Caco-2 (cell line): ENCODE measurements at regions of chr10 and their contacts with region 1.

Region 1: DNA sequence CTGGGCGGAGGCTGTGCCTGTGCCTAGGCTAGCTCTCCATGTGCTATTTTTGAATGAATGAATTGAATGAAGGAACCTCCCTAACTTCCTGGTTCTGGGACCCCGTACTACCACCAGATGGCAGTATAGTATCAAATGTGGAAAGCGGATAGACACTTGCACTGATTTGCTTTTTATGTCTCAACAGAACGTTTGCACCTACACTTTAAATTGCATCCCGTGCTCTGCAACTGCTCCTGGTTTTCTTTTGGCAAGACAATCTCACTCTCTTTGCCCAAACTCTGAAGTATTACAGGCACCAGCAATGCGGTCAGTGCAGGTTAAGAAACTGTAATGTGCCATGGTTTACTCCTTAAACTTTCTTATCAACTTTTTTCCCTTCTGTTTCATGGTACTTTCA is 6.5 kb downstream of the FZD8 start:
- DNase-seq: peak; percentile 60 to 78
- H3K4me3 ChIP-seq: no peak overlapping the region
- H3K4me3 Mint-ChIP-seq: no peak overlapping the region
- H3K27ac Mint-ChIP-seq: no peak overlapping the region
- H3K4me1 ChIP-seq: no peaks in the 10 kb centered on the region
- H3K4me1 Mint-ChIP-seq: no peaks in the 10 kb centered on the region
- H3K27me3 ChIP-seq: no peaks in the 10 kb centered on the region
- H3K27me3 Mint-ChIP-seq: no peaks in the 10 kb centered on the region
- CTCF ChIP-seq: peak; percentile 94 to 96

Region 2: GRCh38 chr10:35613597-35614226 is 21.9 kb before region 1 on chr10:
- CTCF ChIA-PET with region 1: interaction called, 14 read pairs
- POLR2A ChIA-PET with region 1: no interaction called
- intact Hi-C with region 1: no loop called
- DNase-seq: peak in 1 of 2 experiments; percentile 30
- H3K4me3 ChIP-seq: no peak overlapping the region
- H3K4me3 Mint-ChIP-seq: no peak overlapping the region
- H3K27ac Mint-ChIP-seq: no peak overlapping the region
- H3K4me1 ChIP-seq: peaks cover 34% of the 10 kb centered on the region
- H3K4me1 Mint-ChIP-seq: peaks cover 28% of the 10 kb centered on the region
- H3K27me3 ChIP-seq: no peaks in the 10 kb centered on the region
- H3K27me3 Mint-ChIP-seq: no peaks in the 10 kb centered on the region
- CTCF ChIP-seq: peak; percentile 41 to 47

Region 3: DNA sequence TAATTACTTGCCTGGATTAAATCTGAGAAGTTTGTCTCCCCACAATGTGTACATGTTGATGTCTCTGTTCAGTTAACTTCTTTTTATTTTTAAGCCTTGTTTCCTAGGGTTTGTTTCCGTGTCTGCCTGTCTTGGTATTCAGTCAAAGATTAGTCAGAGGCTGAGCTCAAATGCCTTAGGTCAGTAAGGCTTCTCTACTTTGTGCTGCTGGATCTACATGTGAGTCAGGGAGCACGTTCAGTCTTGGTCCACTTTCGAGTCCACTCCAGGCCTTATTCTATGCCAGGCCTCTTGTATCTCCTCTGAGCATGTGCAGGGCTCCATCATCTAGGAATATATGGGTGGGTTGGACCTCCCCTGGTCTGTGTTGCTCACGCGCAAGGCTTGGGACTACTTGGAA is 99.8 kb after region 1 on chr10:
- CTCF ChIA-PET with region 1: no interaction called
- POLR2A ChIA-PET with region 1: no interaction called
- intact Hi-C with region 1: no loop called
- DNase-seq: no peak
- H3K4me3 ChIP-seq: no peak overlapping the region
- H3K4me3 Mint-ChIP-seq: no peak overlapping the region
- H3K27ac Mint-ChIP-seq: no peak overlapping the region
- H3K4me1 ChIP-seq: peaks cover 8% of the 10 kb centered on the region
- H3K4me1 Mint-ChIP-seq: peaks cover 7% of the 10 kb centered on the region
- H3K27me3 ChIP-seq: no peaks in the 10 kb centered on the region
- H3K27me3 Mint-ChIP-seq: peaks cover 3% of the 10 kb centered on the region
- CTCF ChIP-seq: no peak

Region 4: GRCh38 chr10:35916791-35917190 is 281.2 kb after region 1 on chr10:
- CTCF ChIA-PET with region 1: interaction called, 9 read pairs
- POLR2A ChIA-PET with region 1: no interaction called
- intact Hi-C with region 1: loop called (anchors 1 kb)
- DNase-seq: no peak
- H3K4me3 ChIP-seq: no peak overlapping the region
- H3K4me3 Mint-ChIP-seq: no peak overlapping the region
- H3K27ac Mint-ChIP-seq: no peak overlapping the region
- H3K4me1 ChIP-seq: no peaks in the 10 kb centered on the region
- H3K4me1 Mint-ChIP-seq: no peaks in the 10 kb centered on the region
- H3K27me3 ChIP-seq: no peaks in the 10 kb centered on the region
- H3K27me3 Mint-ChIP-seq: peaks cover 14% of the 10 kb centered on the region
- CTCF ChIP-seq: peak in 1 of 2 experiments; percentile 27

Region 5: DNA sequence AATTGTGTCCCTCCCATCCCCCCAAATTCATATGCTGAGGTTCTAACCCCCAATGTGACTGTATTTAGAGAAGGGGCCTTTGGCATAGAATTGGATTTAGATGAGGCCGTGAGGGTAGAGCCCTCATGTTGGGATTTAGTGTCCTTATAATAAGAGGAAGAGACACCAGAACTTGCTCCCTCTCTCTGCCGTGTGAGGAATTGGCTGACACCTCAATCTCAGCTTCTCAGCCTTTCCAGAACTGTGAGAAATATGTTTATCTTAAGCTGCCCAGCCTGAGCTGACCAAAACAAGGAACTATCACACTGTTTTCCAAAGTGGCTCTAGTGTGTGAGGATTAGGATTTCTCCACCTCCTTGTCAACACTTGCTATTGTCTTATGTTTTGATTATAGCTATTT is 406.6 kb after region 1 on chr10:
- CTCF ChIA-PET with region 1: interaction called, 5 read pairs
- POLR2A ChIA-PET with region 1: no interaction called
- intact Hi-C with region 1: loop called (anchors 1 kb)
- DNase-seq: no peak
- H3K4me3 ChIP-seq: no peak overlapping the region
- H3K4me3 Mint-ChIP-seq: no peak overlapping the region
- H3K27ac Mint-ChIP-seq: no peak overlapping the region
- H3K4me1 ChIP-seq: no peaks in the 10 kb centered on the region
- H3K4me1 Mint-ChIP-seq: no peaks in the 10 kb centered on the region
- H3K27me3 ChIP-seq: no peaks in the 10 kb centered on the region
- H3K27me3 Mint-ChIP-seq: peaks cover 5% of the 10 kb centered on the region
- CTCF ChIP-seq: peak in 1 of 2 experiments; percentile 40

Region 6: GRCh38 chr10:36118314-36118713 is 482.7 kb after region 1 on chr10:
- CTCF ChIA-PET with region 1: no interaction called
- POLR2A ChIA-PET with region 1: no interaction called
- intact Hi-C with region 1: no loop called
- DNase-seq: no peak
- H3K4me3 ChIP-seq: no peak overlapping the region
- H3K4me3 Mint-ChIP-seq: no peak overlapping the region
- H3K27ac Mint-ChIP-seq: peak overlapping the region; percentile 55
- H3K4me1 ChIP-seq: peaks cover 29% of the 10 kb centered on the region
- H3K4me1 Mint-ChIP-seq: peaks cover 23% of the 10 kb centered on the region
- H3K27me3 ChIP-seq: no peaks in the 10 kb centered on the region
- H3K27me3 Mint-ChIP-seq: no peaks in the 10 kb centered on the region
- CTCF ChIP-seq: no peak

Region 7: DNA sequence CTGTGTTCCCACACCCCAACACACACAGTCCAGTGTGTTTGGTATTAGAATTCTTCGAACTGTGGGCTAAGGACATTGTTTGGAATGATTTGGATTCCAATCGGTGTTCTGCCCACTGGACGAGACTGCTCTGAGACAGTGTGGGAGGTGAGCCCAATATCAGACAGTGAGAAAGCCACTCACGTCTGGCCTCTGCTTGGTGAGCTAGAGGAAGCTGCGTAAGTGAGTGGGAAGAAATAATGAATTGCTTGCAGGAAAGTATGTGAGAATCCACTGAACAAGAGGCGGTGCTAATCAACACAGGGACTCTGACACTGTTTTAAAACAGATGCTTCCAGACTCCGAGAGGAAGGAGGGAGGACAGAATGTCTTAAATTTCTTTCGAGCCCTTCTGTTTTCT is 814.8 kb after region 1 on chr10:
- CTCF ChIA-PET with region 1: no interaction called
- POLR2A ChIA-PET with region 1: no interaction called
- intact Hi-C with region 1: no loop called
- DNase-seq: no peak
- H3K4me3 ChIP-seq: no peak overlapping the region
- H3K4me3 Mint-ChIP-seq: no peak overlapping the region
- H3K27ac Mint-ChIP-seq: no peak overlapping the region
- H3K4me1 ChIP-seq: peaks cover 7% of the 10 kb centered on the region
- H3K4me1 Mint-ChIP-seq: peaks cover 9% of the 10 kb centered on the region
- H3K27me3 ChIP-seq: no peaks in the 10 kb centered on the region
- H3K27me3 Mint-ChIP-seq: no peaks in the 10 kb centered on the region
- CTCF ChIP-seq: no peak

Region 8: DNA sequence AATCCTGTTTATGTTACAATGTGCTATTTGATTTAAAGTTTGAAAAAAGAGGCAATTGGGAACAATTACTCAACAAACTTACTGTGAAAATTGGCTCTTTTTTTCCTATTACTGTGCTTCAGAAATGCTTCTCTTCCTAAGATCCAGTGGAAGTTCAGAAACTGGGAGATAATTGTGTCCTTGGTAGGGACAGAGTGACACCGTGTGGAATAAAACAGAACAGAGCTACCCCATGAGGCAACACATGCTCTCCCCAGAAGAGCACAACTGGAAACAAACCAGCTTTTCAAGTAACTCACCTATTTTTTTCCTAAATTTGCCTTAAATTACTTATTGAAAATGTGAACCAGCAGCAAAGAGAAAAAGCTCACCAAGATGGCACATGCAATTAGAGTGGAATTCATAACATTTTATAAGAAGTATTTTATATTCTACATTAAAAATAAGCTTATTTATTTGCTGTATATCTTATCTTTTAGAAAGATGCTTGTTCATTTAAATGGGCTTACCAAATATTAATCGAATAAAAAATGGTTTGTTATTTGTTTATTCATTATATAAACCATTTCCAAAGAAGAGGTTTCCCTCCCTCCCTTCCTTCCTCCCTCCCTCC is 1143.8 kb after region 1 on chr10:
- CTCF ChIA-PET with region 1: interaction called, 13 read pairs
- POLR2A ChIA-PET with region 1: no interaction called
- intact Hi-C with region 1: loop called (anchors 1 kb)
- DNase-seq: peak in 1 of 2 experiments; percentile 55
- H3K4me3 ChIP-seq: no peak overlapping the region
- H3K4me3 Mint-ChIP-seq: no peak overlapping the region
- H3K27ac Mint-ChIP-seq: no peak overlapping the region
- H3K4me1 ChIP-seq: no peaks in the 10 kb centered on the region
- H3K4me1 Mint-ChIP-seq: no peaks in the 10 kb centered on the region
- H3K27me3 ChIP-seq: no peaks in the 10 kb centered on the region
- H3K27me3 Mint-ChIP-seq: peaks cover 17% of the 10 kb centered on the region
- CTCF ChIP-seq: peak; percentile 72 to 76